ENCODE measurements at regions of chr2 and their contacts with region 1.

Region 1: DNA sequence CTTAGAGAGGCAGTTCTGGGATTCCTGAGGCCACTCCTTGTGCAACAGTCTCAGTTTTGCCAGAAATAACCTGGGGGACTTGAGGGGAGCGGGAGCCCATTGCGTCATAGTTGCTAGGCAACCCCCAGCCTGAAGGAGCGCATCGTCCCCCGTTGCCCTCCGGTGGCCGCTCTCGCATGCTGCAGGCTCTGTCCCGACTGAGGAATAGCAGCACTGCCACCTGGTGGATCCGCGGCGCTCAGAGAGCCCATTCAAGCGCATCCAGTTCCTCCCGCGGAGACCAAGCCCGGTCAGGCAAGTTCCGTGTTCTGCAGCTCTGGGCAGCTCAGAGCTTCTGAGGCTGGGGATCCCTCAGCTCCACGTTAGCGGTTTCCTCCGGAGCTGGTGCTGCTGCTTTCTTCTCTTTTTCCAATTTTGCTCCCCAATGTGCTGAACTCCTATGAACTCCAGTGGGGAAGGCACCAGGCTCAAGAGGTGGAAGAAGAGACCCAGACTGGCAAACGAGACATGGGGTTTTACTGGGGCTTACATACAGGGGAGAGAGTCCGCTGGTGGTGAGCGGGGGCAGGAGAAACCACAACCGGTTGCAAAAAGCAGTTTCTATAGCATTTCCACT is 15.1 kb downstream of the SLC4A3 start:
- DNase-seq: peak; percentile 95 to 96
- H3K4me3 ChIP-seq: no peak overlapping the region
- H3K27ac ChIP-seq: peak overlapping the region; percentile 50 to 71
- H3K4me1 ChIP-seq: peaks cover 0 to 3% of the 10 kb centered on the region in 2 donors
- H3K27me3 ChIP-seq: no peaks in the 10 kb centered on the region
- CTCF ChIP-seq: peak; percentile 98 to 100 (median 100)
- POLR2A ChIP-seq: no peak

Region 2: DNA sequence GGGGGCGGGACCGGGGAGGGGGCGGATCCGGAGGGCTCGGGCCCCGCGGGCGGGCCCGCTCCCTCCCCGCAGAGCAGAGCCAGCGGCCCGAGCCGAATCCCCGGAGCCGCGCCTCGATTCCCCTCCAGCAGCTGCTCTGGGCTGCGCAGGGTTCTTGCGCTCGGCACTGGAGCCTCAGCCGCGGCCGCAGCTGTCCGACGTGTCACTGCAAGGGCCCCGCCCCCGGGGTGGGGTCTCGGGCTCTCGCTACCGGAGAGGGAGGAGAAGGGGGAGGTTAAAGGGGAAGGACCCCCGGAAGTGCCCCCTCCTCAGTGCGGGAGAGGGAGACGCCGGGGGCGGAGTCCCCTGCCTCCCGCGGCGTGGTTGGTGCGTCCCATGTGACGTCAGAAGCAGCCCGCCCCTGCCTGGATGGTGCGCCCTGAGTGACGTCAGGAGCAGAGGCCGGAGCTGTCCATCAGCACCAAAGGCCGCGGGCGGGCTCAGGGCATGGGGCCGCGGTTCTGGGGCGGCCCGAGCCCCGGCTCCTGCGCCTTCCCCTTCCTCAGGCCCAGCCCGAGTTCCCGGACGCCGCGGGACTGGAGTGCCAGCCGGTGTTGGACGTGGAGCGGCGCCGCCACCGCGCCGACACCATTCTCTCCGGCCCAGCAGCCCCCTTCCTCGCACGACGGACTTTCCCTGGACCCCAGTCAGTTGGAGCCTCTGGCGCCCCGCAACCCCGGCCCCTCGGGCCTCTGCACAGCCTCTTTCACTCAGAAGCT is 98.8 kb before region 1 on chr2 and contains the starts of genes CHPF and TMEM198:
- intact Hi-C with region 1: loop called (anchors 2 kb)
- DNase-seq: peak; percentile 98 to 99
- H3K4me3 ChIP-seq: peak within 1 kb of the TSS; percentile 62 to 85 (median 78)
- H3K27ac ChIP-seq: peak within 1 kb of the TSS; percentile 90 to 91
- H3K4me1 ChIP-seq: peaks cover 0 to 8% of the 10 kb centered on the region in 2 donors
- H3K27me3 ChIP-seq: no peaks in the 10 kb centered on the region
- CTCF ChIP-seq: peak in 1 of 3 donors; percentile 9
- POLR2A ChIP-seq: peak; percentile 15
- total RNA-seq, gene CHPF: 46.5 to 58.9 (median 49.0) TPM
- total RNA-seq, gene TMEM198: 1.6 to 1.9 (median 1.8) TPM

Region 3: DNA sequence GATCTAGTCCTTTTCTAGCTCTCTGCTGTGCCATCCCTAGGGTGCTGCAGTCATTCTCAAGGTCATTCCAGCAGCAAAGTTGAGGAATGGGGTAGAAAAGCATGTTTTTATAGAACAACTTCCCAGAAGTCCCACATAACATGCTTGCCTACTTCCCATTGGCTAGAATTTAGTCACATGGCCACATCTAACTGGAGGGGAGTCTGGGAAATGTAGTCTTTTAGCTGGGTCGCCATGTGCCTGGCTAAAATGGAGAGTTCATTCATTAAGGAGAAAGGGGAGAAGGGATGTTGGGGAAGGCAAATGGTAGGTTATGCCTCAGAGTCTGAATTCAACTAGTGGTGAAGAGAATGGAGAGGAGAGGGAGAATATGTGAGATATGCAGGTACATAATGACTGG is 70.5 kb after region 1 on chr2:
- intact Hi-C with region 1: no loop called
- DNase-seq: no peak
- H3K4me3 ChIP-seq: no peak overlapping the region
- H3K27ac ChIP-seq: no peak overlapping the region
- H3K4me1 ChIP-seq: no peaks in the 10 kb centered on the region
- H3K27me3 ChIP-seq: no peaks in the 10 kb centered on the region
- CTCF ChIP-seq: no peak
- POLR2A ChIP-seq: no peak

Measured in breast epithelium (tissue), 4 donors.